ENCODE measurements at regions of chr10 and their contacts with region 1.

Region 1: GRCh38 chr10:114550756-114551635 is 107.1 kb downstream of the ABLIM1 start:
- DNase-seq: peak in 3 of 14 experiments; percentile 29 to 51 (median 45)
- ATAC-seq: no peak
- H3K4me3 ChIP-seq: no peak overlapping the region
- H3K4me3 Mint-ChIP-seq: no peak overlapping the region
- H3K27ac ChIP-seq: no peak overlapping the region
- H3K27ac Mint-ChIP-seq: peak overlapping the region; percentile 2
- H3K4me1 ChIP-seq: peaks cover 30% of the 10 kb centered on the region
- H3K4me1 Mint-ChIP-seq: peaks cover 33% of the 10 kb centered on the region
- H3K27me3 ChIP-seq: no peaks in the 10 kb centered on the region
- H3K27me3 Mint-ChIP-seq: no peaks in the 10 kb centered on the region
- CTCF ChIP-seq: peak; percentile 74

Region 2: DNA sequence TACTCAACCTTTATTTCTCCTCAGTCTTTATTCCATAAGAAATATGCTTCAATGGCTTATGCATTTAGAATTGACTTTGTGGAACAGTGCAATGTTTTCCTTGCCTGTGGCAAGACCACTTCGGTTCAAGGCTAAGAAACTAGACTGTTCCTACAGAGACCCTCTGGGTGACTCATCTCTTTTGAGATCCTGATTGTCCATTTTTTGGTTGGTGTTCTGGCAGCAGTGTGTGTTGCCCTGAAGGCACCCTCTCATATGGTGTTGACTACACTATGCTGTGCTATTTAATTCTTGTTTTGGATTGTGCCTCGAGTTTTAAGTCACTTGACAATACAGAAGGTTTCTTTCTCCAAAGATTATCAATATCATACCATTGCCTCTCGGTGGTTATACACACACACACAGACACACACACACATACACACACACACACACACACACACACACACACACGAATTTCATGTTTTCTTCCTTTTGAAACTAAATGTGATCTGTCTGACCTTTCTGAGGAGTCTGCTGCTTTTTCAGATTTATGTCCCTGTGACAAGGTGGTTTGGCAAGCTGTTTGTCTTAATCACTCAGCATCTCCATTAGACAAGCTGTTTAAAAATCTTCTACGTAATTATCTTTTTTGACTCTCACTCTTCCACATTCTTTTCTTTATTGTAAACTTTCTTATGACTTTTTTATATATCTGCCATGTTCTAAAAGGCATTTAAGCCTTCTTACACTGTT is 1916.7 kb before region 1 on chr10:
- CTCF ChIA-PET with region 1: no interaction called
- POLR2A ChIA-PET with region 1: no interaction called
- intact Hi-C with region 1: no loop called
- DNase-seq: no peak
- ATAC-seq: no peak
- H3K4me3 ChIP-seq: no peak overlapping the region
- H3K4me3 Mint-ChIP-seq: no peak overlapping the region
- H3K27ac ChIP-seq: no peak overlapping the region
- H3K27ac Mint-ChIP-seq: no peak overlapping the region
- H3K4me1 ChIP-seq: no peaks in the 10 kb centered on the region
- H3K4me1 Mint-ChIP-seq: no peaks in the 10 kb centered on the region
- H3K27me3 ChIP-seq: no peaks in the 10 kb centered on the region
- H3K27me3 Mint-ChIP-seq: no peaks in the 10 kb centered on the region
- CTCF ChIP-seq: no peak

Region 3: GRCh38 chr10:113610631-113611585 is 940.1 kb before region 1 on chr10:
- CTCF ChIA-PET with region 1: no interaction called
- POLR2A ChIA-PET with region 1: no interaction called
- intact Hi-C with region 1: no loop called
- DNase-seq: no peak
- ATAC-seq: no peak
- H3K4me3 ChIP-seq: no peak overlapping the region
- H3K4me3 Mint-ChIP-seq: no peak overlapping the region
- H3K27ac ChIP-seq: no peak overlapping the region
- H3K27ac Mint-ChIP-seq: no peak overlapping the region
- H3K4me1 ChIP-seq: no peaks in the 10 kb centered on the region
- H3K4me1 Mint-ChIP-seq: no peaks in the 10 kb centered on the region
- H3K27me3 ChIP-seq: no peaks in the 10 kb centered on the region
- H3K27me3 Mint-ChIP-seq: peaks cover 26% of the 10 kb centered on the region
- CTCF ChIP-seq: no peak

Region 4: GRCh38 chr10:114304017-114304570 is 246.9 kb before region 1 on chr10:
- CTCF ChIA-PET with region 1: no interaction called
- POLR2A ChIA-PET with region 1: no interaction called
- intact Hi-C with region 1: loop called in 1 of 2 experiments (anchors 2 kb)
- DNase-seq: peak; percentile 28 to 78 (median 58)
- ATAC-seq: peak; percentile 24
- H3K4me3 ChIP-seq: peak overlapping the region; percentile 78
- H3K4me3 Mint-ChIP-seq: peak overlapping the region; percentile 86
- H3K27ac ChIP-seq: no peak overlapping the region
- H3K27ac Mint-ChIP-seq: peak overlapping the region; percentile 5
- H3K4me1 ChIP-seq: peaks cover 13% of the 10 kb centered on the region
- H3K4me1 Mint-ChIP-seq: peaks cover 12% of the 10 kb centered on the region
- H3K27me3 ChIP-seq: no peaks in the 10 kb centered on the region
- H3K27me3 Mint-ChIP-seq: no peaks in the 10 kb centered on the region
- CTCF ChIP-seq: peak; percentile 81

Region 5: GRCh38 chr10:114492351-114493037 is 58.5 kb before region 1 on chr10:
- CTCF ChIA-PET with region 1: no interaction called
- POLR2A ChIA-PET with region 1: no interaction called
- intact Hi-C with region 1: loop called in 1 of 2 experiments (anchors 5 kb)
- DNase-seq: peak in 4 of 14 experiments; percentile 40 to 69 (median 54)
- ATAC-seq: peak; percentile 54
- H3K4me3 ChIP-seq: no peak overlapping the region
- H3K4me3 Mint-ChIP-seq: peak overlapping the region; percentile 74
- H3K27ac ChIP-seq: peak overlapping the region in 1 of 2 donors; percentile 16
- H3K27ac Mint-ChIP-seq: peak overlapping the region; percentile 66
- H3K4me1 ChIP-seq: peaks cover 42% of the 10 kb centered on the region
- H3K4me1 Mint-ChIP-seq: peaks cover 78% of the 10 kb centered on the region
- H3K27me3 ChIP-seq: no peaks in the 10 kb centered on the region
- H3K27me3 Mint-ChIP-seq: no peaks in the 10 kb centered on the region
- CTCF ChIP-seq: no peak

Region 6: DNA sequence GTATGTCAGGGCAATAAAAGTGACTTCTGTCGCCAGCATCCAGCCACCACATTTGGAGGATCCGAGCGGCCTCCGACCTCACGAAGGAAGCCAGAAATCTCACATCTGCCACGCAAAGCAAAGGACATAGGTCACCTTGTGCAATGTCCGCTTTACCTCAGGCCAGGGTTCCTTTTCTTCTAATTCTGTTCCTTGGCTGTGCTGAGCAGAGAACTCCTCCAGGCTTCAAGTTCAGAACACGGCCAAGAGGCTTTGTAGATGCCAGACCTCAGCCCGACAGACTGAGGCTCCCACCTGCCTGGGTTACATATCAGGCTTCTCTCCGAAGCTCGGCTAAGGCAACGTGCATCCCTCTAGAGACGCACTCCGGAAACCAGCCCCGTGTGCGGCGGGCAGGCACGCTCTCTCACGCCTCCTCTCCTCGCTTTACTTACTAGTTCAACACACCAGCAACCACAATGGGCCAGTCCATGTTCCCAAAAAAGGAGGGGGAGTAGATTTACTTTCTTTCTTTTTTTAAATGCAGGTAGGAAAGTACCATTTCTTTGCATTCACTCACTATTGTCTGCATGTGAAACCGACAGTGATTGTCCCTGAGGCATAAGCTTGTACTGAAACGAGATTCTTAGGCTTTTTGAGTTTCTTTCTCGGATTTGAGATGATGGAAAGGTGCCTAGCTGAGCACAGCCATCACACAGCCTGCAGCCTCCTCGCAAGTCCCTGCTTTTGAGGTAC is 24.3 kb before region 1 on chr10:
- CTCF ChIA-PET with region 1: interaction called, 18 read pairs
- POLR2A ChIA-PET with region 1: interaction called, 475 read pairs
- intact Hi-C with region 1: loop called in 1 of 2 experiments (anchors 1 kb)
- DNase-seq: peak; percentile 84 to 97 (median 88)
- ATAC-seq: peak; percentile 88
- H3K4me3 ChIP-seq: peak overlapping the region; percentile 73
- H3K4me3 Mint-ChIP-seq: peak overlapping the region; percentile 99
- H3K27ac ChIP-seq: peak overlapping the region; percentile 71 to 95
- H3K27ac Mint-ChIP-seq: peak overlapping the region; percentile 96
- H3K4me1 ChIP-seq: peaks cover 57% of the 10 kb centered on the region
- H3K4me1 Mint-ChIP-seq: peaks cover 73% of the 10 kb centered on the region
- H3K27me3 ChIP-seq: no peaks in the 10 kb centered on the region
- H3K27me3 Mint-ChIP-seq: no peaks in the 10 kb centered on the region
- CTCF ChIP-seq: no peak

Region 7: DNA sequence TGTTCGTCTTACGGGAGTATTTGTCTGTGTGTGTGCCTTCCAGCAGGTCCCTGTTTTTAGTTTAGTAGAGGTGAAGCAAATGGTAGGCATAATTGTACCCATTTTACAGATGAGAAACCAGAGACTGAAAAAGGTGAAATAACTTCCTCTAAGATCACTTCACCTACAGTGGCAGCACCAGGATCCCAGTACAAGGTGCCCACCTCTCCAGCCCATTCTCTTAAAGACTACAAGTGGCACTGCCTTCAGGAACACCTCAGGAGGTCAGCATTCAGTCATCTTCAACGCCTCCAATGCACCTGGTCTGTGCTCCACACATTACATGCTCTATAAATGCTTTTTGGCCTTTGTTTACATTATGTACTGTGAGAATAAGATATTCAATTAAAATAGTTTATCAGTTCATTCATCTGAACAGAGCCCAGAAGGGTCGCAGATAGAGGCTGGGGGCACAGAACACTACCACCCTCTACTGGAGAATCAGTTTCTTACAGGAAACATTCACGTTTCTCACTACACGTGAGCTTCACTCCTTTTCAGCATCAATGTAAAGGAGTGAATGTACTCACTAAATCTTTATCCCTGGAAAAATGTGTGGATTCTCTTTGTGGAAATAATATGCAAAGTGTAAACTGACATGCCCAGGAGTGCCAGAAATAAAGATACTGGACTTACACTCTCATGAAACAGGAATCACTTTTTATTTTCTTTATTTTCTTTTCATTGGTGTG is 152.5 kb after region 1 on chr10:
- CTCF ChIA-PET with region 1: no interaction called
- POLR2A ChIA-PET with region 1: no interaction called
- intact Hi-C with region 1: loop called in 1 of 2 experiments (anchors 2 kb)
- DNase-seq: peak in 7 of 14 experiments; percentile 3 to 53 (median 30)
- ATAC-seq: peak; percentile 80
- H3K4me3 ChIP-seq: no peak overlapping the region
- H3K4me3 Mint-ChIP-seq: no peak overlapping the region
- H3K27ac ChIP-seq: no peak overlapping the region
- H3K27ac Mint-ChIP-seq: no peak overlapping the region
- H3K4me1 ChIP-seq: no peaks in the 10 kb centered on the region
- H3K4me1 Mint-ChIP-seq: no peaks in the 10 kb centered on the region
- H3K27me3 ChIP-seq: no peaks in the 10 kb centered on the region
- H3K27me3 Mint-ChIP-seq: peaks cover 7% of the 10 kb centered on the region
- CTCF ChIP-seq: peak; percentile 67

Region 8: GRCh38 chr10:114821293-114821914 is 270.4 kb after region 1 on chr10 and contains the start of gene FHIP2A:
- CTCF ChIA-PET with region 1: no interaction called
- POLR2A ChIA-PET with region 1: no interaction called
- intact Hi-C with region 1: loop called (anchors 2 to 10 kb)
- DNase-seq: peak; percentile 61 to 93 (median 82)
- ATAC-seq: peak; percentile 92
- H3K4me3 ChIP-seq: peak within 1 kb of the TSS; percentile 66
- H3K4me3 Mint-ChIP-seq: peak within 1 kb of the TSS; percentile 94
- H3K27ac ChIP-seq: peak within 1 kb of the TSS; percentile 49 to 57
- H3K27ac Mint-ChIP-seq: peak within 1 kb of the TSS; percentile 92
- H3K4me1 ChIP-seq: peaks cover 15% of the 10 kb centered on the region
- H3K4me1 Mint-ChIP-seq: peaks cover 41% of the 10 kb centered on the region
- H3K27me3 ChIP-seq: no peaks in the 10 kb centered on the region
- H3K27me3 Mint-ChIP-seq: no peaks in the 10 kb centered on the region
- CTCF ChIP-seq: peak; percentile 25
- total RNA-seq, gene FHIP2A: 52.8 to 53.7 TPM

Region 9: GRCh38 chr10:114839901-114840300 is 288.9 kb after region 1 on chr10:
- CTCF ChIA-PET with region 1: no interaction called
- POLR2A ChIA-PET with region 1: no interaction called
- intact Hi-C with region 1: no loop called
- DNase-seq: no peak
- ATAC-seq: no peak
- H3K4me3 ChIP-seq: no peak overlapping the region
- H3K4me3 Mint-ChIP-seq: no peak overlapping the region
- H3K27ac ChIP-seq: no peak overlapping the region
- H3K27ac Mint-ChIP-seq: no peak overlapping the region
- H3K4me1 ChIP-seq: no peaks in the 10 kb centered on the region
- H3K4me1 Mint-ChIP-seq: no peaks in the 10 kb centered on the region
- H3K27me3 ChIP-seq: no peaks in the 10 kb centered on the region
- H3K27me3 Mint-ChIP-seq: no peaks in the 10 kb centered on the region
- CTCF ChIP-seq: no peak

Measured in CD4-positive, alpha-beta T cell (primary cell).